ENCODE measurements at regions of chr6 and their contacts with region 1.

Region 1: GRCh38 chr6:161748535-161749416 is 474.9 kb upstream of the AGPAT4 start:
- DNase-seq: peak; percentile 5
- H3K4me3 ChIP-seq: no peak overlapping the region
- H3K27ac ChIP-seq: no peak overlapping the region
- H3K4me1 ChIP-seq: no peaks in the 10 kb centered on the region
- H3K27me3 ChIP-seq: no peaks in the 10 kb centered on the region
- CTCF ChIP-seq: peak; percentile 26 to 35
- POLR2A ChIP-seq: no peak

Region 2: GRCh38 chr6:161736781-161737292 is 11.9 kb before region 1 on chr6:
- CTCF ChIA-PET with region 1: no interaction called
- POLR2A ChIA-PET with region 1: no interaction called
- dilution Hi-C with region 1: no loop called
- intact Hi-C with region 1: no loop called
- DNase-seq: no peak
- H3K4me3 ChIP-seq: no peak overlapping the region
- H3K27ac ChIP-seq: no peak overlapping the region
- H3K4me1 ChIP-seq: no peaks in the 10 kb centered on the region
- H3K27me3 ChIP-seq: no peaks in the 10 kb centered on the region
- CTCF ChIP-seq: no peak
- POLR2A ChIP-seq: no peak

Region 3: GRCh38 chr6:161922631-161923119 is 173.9 kb after region 1 on chr6:
- CTCF ChIA-PET with region 1: no interaction called
- POLR2A ChIA-PET with region 1: no interaction called
- dilution Hi-C with region 1: no loop called
- intact Hi-C with region 1: loop called (anchors 2 kb)
- DNase-seq: peak; percentile 10
- H3K4me3 ChIP-seq: no peak overlapping the region
- H3K27ac ChIP-seq: peak overlapping the region; percentile 53
- H3K4me1 ChIP-seq: peaks cover 12% of the 10 kb centered on the region
- H3K27me3 ChIP-seq: no peaks in the 10 kb centered on the region
- CTCF ChIP-seq: no peak
- POLR2A ChIP-seq: no peak

Measured in endothelial cell of umbilical vein (primary cell).